Activated CD4-positive, alpha-beta memory T cell treated with anti-CD3 and anti-CD28 coated beads for 36 hours (primary cell): ENCODE measurements at regions of chr1 and their contacts with region 1.

Region 1: GRCh38 chr1:11037740-11038182 is 9.3 kb downstream of the MASP2 start:
- DNase-seq: peak; percentile 92
- H3K4me3 Mint-ChIP-seq: no peak overlapping the region
- H3K27ac Mint-ChIP-seq: no peak overlapping the region
- H3K4me1 Mint-ChIP-seq: peaks cover 4% of the 10 kb centered on the region
- H3K27me3 Mint-ChIP-seq: no peaks in the 10 kb centered on the region

Region 2: GRCh38 chr1:11053758-11054137 is 16.0 kb after region 1 on chr1:
- CTCF ChIA-PET with region 1: interaction called, 37 read pairs
- POLR2A ChIA-PET with region 1: interaction called, 3 read pairs
- intact Hi-C with region 1: no loop called
- DNase-seq: peak; percentile 27
- H3K4me3 Mint-ChIP-seq: no peak overlapping the region
- H3K27ac Mint-ChIP-seq: no peak overlapping the region
- H3K4me1 Mint-ChIP-seq: peaks cover 19% of the 10 kb centered on the region
- H3K27me3 Mint-ChIP-seq: no peaks in the 10 kb centered on the region

Region 3: GRCh38 chr1:11080931-11081330 is 43.2 kb after region 1 on chr1:
- CTCF ChIA-PET with region 1: interaction called, 15 read pairs
- POLR2A ChIA-PET with region 1: no interaction called
- intact Hi-C with region 1: no loop called
- DNase-seq: no peak
- H3K4me3 Mint-ChIP-seq: no peak overlapping the region
- H3K27ac Mint-ChIP-seq: no peak overlapping the region
- H3K4me1 Mint-ChIP-seq: no peaks in the 10 kb centered on the region
- H3K27me3 Mint-ChIP-seq: no peaks in the 10 kb centered on the region

Region 4: DNA sequence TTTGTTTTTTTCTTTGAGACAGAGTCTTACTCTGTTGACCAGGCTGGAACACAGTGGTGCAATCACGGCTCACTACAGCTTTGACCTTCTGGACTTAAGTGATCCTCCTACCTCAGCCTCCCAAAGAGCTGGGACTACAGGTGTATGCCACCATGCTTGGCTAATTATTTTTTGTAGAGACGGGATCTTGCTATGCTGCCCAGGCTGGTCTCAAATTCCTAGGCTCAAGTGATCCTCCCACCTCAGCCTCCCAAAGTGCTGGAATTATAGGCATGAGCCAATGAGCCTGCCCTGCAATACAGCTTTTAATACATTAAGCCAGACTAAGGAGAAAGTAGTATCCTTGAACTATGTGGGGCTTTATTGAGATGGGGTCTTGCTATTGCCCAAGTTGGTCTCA is 78.6 kb after region 1 on chr1:
- CTCF ChIA-PET with region 1: interaction called, 11 read pairs
- POLR2A ChIA-PET with region 1: no interaction called
- intact Hi-C with region 1: no loop called
- DNase-seq: no peak
- H3K4me3 Mint-ChIP-seq: no peak overlapping the region
- H3K27ac Mint-ChIP-seq: no peak overlapping the region
- H3K4me1 Mint-ChIP-seq: no peaks in the 10 kb centered on the region
- H3K27me3 Mint-ChIP-seq: no peaks in the 10 kb centered on the region

Region 5: DNA sequence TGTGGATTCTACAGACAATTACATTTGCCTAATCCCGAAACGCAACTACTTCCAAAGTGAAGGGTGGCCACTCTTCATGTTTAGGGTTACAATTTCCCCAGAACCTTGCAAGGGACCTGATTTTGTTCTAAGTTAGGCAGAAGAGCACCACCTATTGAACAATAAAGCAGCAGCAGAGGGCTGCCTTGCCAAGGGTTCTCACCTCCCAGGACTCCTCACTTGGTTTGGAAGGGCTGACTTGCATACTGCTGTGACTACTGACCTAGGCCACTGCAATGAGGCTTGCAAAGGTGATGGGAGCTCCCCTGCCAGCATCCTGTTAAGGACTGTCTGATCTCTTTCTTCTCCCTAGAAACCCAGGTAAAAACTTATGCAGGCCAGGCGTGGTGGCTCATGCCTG is 210.4 kb after region 1 on chr1:
- CTCF ChIA-PET with region 1: interaction called, 8 read pairs
- POLR2A ChIA-PET with region 1: no interaction called
- intact Hi-C with region 1: loop called (anchors 5 kb)
- DNase-seq: no peak
- H3K4me3 Mint-ChIP-seq: no peak overlapping the region
- H3K27ac Mint-ChIP-seq: no peak overlapping the region
- H3K4me1 Mint-ChIP-seq: peaks cover 14% of the 10 kb centered on the region
- H3K27me3 Mint-ChIP-seq: no peaks in the 10 kb centered on the region

Region 6: GRCh38 chr1:11661103-11661502 is 623.3 kb after region 1 on chr1:
- CTCF ChIA-PET with region 1: interaction called, 10 read pairs
- POLR2A ChIA-PET with region 1: no interaction called
- intact Hi-C with region 1: no loop called
- DNase-seq: no peak
- H3K4me3 Mint-ChIP-seq: no peak overlapping the region
- H3K27ac Mint-ChIP-seq: no peak overlapping the region
- H3K4me1 Mint-ChIP-seq: no peaks in the 10 kb centered on the region
- H3K27me3 Mint-ChIP-seq: no peaks in the 10 kb centered on the region